BJ (cell line): ENCODE measurements at regions of chr6 and their contacts with region 1.

Region 1: GRCh38 chr6:63802606-63803206 is 167.1 kb downstream of the PHF3 start:
- DNase-seq: no peak
- H3K4me3 ChIP-seq: no peak overlapping the region
- H3K27me3 ChIP-seq: no peaks in the 10 kb centered on the region
- CTCF ChIP-seq: peak; percentile 62

Region 2: DNA sequence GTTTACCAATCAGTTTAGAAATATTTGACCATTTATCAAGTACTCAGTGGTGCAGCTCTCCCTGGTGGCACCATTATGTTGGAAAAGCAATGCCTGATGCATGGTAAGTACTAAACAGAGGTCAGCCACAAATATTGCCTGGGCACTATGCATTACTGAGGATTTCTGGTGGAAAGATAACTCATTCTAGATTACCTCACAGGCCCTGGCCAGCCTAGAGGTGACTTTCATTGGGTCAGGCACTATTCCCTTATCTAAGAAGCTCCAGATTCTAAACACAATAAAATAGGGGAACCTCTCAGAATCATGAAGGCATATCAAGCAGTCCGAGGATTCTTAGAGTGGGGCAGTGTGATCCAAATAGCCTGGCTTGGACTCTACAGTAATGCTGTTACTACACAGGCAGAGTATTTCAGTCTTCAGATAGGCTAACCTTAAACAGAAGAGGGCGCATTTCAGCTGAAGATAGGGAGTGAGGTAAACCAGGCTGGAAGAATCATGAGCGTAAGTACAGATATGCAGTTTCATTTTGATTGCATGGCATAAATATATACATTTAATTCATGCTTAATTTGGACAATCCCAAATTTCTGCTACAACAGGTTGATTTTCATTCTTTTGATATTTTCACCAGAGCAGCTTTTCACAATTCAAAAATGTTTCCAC is 495.0 kb before region 1 on chr6:
- CTCF ChIA-PET with region 1: interaction called, 12 read pairs
- POLR2A ChIA-PET with region 1: no interaction called
- DNase-seq: no peak
- H3K4me3 ChIP-seq: no peak overlapping the region
- H3K27me3 ChIP-seq: no peaks in the 10 kb centered on the region
- CTCF ChIP-seq: peak; percentile 54

Region 3: GRCh38 chr6:63347599-63347998 is 455.1 kb before region 1 on chr6:
- CTCF ChIA-PET with region 1: interaction called, 13 read pairs
- POLR2A ChIA-PET with region 1: no interaction called
- DNase-seq: peak; percentile 57
- H3K4me3 ChIP-seq: no peak overlapping the region
- H3K27me3 ChIP-seq: no peaks in the 10 kb centered on the region
- CTCF ChIP-seq: no peak

Region 4: GRCh38 chr6:63352587-63353285 is 450.0 kb before region 1 on chr6:
- CTCF ChIA-PET with region 1: interaction called, 13 read pairs
- POLR2A ChIA-PET with region 1: no interaction called
- DNase-seq: no peak
- H3K4me3 ChIP-seq: no peak overlapping the region
- H3K27me3 ChIP-seq: no peaks in the 10 kb centered on the region
- CTCF ChIP-seq: peak; percentile 32; the same call in 1 of the 2 replicates

Region 5: DNA sequence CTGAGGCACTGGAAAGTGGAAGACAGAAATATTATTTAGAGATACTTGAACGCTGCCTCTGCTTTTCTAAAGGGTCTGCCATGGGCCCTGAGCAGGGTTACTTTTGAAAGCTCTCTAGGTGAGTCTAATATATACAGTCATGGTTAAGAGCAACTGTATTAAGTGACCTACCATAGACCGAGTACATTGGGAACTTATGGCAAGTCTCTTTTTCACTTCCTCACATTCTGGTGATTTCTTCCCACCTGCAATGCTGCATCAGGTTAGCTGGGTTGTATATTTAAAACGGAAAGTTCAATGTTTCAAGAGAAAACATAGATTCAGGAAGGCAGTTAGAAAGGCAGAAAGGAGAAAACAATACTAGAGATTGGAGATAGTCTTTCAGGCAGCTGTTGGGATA is 12.4 kb before region 1 on chr6:
- CTCF ChIA-PET with region 1: interaction called, 13 read pairs
- POLR2A ChIA-PET with region 1: no interaction called
- DNase-seq: no peak
- H3K4me3 ChIP-seq: no peak overlapping the region
- H3K27me3 ChIP-seq: no peaks in the 10 kb centered on the region
- CTCF ChIP-seq: no peak

Region 6: DNA sequence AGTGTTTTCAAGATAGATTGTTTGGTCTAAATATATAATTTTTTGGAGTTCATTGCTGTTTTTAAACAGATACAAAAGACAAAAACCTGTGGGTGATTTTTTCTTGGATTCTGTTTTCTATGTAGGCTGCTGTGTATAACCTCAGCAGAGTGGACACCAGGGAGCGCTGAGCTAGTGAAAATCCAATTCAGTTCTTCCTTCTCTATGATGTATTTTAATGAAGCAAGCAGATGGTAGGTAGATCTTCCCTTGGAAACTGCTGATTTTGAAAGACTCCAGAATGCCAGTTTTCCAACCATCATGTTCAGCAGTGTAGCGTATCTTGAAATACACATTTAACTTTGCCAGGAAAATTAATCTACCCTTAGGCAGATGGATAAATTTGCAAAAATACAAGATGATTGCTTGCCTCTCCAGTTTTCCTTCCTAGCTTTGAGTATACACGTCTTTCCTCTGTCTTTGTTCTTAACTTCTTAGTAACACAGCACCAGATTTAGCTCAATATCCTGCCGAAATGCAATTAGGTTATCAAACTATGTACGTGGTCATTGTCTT is 10.9 kb after region 1 on chr6:
- CTCF ChIA-PET with region 1: interaction called, 14 read pairs
- POLR2A ChIA-PET with region 1: no interaction called
- DNase-seq: no peak
- H3K4me3 ChIP-seq: no peak overlapping the region
- H3K27me3 ChIP-seq: no peaks in the 10 kb centered on the region
- CTCF ChIP-seq: no peak

Region 7: DNA sequence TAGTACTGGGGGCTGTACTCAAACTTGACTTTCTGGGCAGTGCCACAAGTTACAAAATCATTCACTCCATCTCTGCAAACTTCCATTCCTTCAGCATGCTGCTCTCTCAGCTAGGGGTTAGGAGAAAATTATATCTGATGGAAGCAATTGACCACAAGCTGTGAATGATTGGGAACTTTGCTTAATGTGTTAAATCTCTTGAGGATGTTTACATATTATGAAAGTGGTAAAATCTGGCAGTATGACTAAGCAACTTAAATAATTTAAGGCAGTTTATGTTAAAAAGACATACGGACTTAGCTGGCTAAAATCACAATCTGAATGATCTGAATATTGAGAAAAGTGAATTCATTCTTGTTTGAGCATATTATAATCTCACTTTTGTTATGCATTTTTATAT is 247.9 kb after region 1 on chr6:
- CTCF ChIA-PET with region 1: no interaction called
- POLR2A ChIA-PET with region 1: no interaction called
- DNase-seq: no peak
- H3K4me3 ChIP-seq: no peak overlapping the region
- H3K27me3 ChIP-seq: no peaks in the 10 kb centered on the region
- CTCF ChIP-seq: no peak